Esophagus squamous epithelium (tissue), 5 donors: ENCODE measurements at regions of chr5 and their contacts with region 1.

Region 1: DNA sequence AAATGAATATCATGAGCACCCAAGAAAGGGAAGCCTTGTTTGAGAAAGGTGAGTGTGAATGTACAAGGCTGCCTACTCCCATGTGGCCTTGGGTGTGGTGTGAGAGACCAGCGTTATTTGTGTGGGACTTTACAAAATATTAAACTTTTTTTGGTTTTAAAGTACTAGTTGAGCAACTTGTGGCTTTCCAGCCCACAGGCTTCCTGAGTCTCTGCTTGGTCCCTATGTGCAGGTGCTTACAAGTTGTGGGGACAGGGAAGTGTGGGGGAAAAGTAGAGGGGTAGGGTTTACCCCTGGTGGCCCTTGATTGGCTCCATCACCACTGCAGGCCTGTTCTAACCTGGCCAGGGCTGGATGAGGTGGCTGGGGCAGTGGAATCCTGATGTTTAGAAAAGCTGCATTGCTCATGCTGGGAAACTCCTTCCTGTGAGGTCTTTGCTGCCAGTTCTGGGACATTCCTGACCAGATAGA is 19.7 kb downstream of the PTTG1 start:
- DNase-seq: no peak
- H3K4me3 ChIP-seq: no peak overlapping the region
- H3K27ac ChIP-seq: no peak overlapping the region
- H3K4me1 ChIP-seq: peaks cover 4 to 17% (median 4%) of the 10 kb centered on the region in 3 donors
- H3K27me3 ChIP-seq: no peaks in the 10 kb centered on the region
- CTCF ChIP-seq: no peak
- POLR2A ChIP-seq: no peak

Region 2: DNA sequence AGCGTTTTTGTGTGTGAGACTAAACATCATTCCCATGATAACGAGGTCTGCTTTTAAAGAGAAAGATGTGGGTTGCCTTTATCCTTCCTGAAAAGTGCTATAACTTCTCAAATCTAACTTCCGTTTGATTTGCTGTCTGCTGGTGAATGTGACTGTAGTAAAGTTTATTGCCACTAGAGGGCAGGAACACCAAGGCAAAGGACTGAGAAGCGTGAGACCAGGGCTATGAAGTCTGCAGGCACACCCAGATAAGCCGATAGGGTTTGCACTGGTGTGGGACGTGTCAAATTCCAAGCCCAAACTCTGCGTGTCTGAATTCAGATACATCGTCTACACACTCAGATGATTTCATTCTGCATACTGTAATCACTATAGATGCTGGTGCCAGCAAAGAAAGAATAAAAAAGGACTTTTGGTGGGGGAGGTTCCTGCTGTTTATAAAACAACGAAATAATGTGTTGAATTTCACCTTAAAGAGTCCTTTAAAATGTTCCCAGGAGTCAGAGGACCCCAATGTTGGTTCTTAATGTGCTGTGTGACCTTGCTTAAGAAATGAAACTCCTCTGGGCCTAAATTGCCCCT is 67.5 kb after region 1 on chr5:
- intact Hi-C with region 1: loop called (anchors 10 kb)
- DNase-seq: no peak
- H3K4me3 ChIP-seq: no peak overlapping the region
- H3K27ac ChIP-seq: no peak overlapping the region
- H3K4me1 ChIP-seq: peaks cover 0 to 8% (median 5%) of the 10 kb centered on the region in 3 donors
- H3K27me3 ChIP-seq: peaks cover 0 to 10% (median 0%) of the 10 kb centered on the region in 4 donors
- CTCF ChIP-seq: peak; percentile 63 to 91 (median 85)
- POLR2A ChIP-seq: no peak